ENCODE measurements at regions of chr14 and their contacts with region 1.

Region 1: GRCh38 chr14:55430024-55430690 is 10.3 kb downstream of the TBPL2 start:
- DNase-seq: peak; percentile 70 to 91
- H3K4me3 ChIP-seq: no peak overlapping the region
- H3K27ac ChIP-seq: peak overlapping the region; percentile 37; the same call in 1 of the 2 replicates
- H3K4me1 ChIP-seq: peaks cover 29% of the 10 kb centered on the region
- H3K27me3 ChIP-seq: no peaks in the 10 kb centered on the region
- CTCF ChIP-seq: peak; percentile 64

Region 2: DNA sequence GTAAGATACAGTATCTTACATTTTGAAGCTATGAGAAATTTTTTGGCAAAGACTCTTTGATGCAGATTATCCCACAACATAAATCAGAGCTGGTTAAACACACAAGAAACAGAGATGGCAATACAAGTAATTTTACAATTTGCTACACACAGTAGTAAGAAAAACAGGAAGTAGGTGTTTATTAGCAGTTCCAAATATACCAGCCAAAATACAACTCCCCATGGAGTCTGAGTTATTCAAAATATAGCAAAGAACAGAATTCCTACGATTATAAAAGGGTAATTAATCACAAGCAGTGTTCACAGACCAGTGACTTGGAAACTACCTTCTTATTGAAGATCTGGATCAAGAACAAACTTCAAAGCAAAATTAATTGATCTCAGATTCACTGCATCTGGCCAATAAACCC is 1557.5 kb before region 1 on chr14:
- CTCF ChIA-PET with region 1: no interaction called
- POLR2A ChIA-PET with region 1: no interaction called
- intact Hi-C with region 1: no loop called
- DNase-seq: no peak
- H3K4me3 ChIP-seq: no peak overlapping the region
- H3K27ac ChIP-seq: no peak overlapping the region
- H3K4me1 ChIP-seq: no peaks in the 10 kb centered on the region
- H3K27me3 ChIP-seq: no peaks in the 10 kb centered on the region
- CTCF ChIP-seq: no peak

Region 3: DNA sequence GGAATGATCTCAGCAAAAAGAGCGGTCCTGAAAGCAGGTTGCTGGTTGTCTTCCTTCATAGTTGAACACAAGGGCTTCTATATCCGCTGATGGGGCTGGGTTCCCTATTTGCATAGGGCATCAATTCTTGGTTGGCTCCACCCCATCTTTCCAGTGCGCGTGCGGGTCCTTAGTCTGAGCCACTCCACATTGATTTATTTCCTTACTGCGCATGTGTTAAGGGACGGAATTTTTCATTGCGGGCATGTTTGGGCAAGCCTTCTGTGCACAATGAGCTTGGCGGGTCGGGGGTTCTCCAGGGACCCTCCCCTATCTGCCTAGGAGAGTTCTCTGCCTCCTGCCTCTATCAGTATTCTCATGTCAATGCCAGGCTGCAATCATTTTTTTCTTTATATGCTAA is 217.5 kb before region 1 on chr14:
- CTCF ChIA-PET with region 1: interaction called, 14 read pairs
- POLR2A ChIA-PET with region 1: no interaction called
- intact Hi-C with region 1: loop called (anchors 1 kb)
- DNase-seq: no peak
- H3K4me3 ChIP-seq: no peak overlapping the region
- H3K27ac ChIP-seq: no peak overlapping the region
- H3K4me1 ChIP-seq: no peaks in the 10 kb centered on the region
- H3K27me3 ChIP-seq: no peaks in the 10 kb centered on the region
- CTCF ChIP-seq: no peak

Region 4: DNA sequence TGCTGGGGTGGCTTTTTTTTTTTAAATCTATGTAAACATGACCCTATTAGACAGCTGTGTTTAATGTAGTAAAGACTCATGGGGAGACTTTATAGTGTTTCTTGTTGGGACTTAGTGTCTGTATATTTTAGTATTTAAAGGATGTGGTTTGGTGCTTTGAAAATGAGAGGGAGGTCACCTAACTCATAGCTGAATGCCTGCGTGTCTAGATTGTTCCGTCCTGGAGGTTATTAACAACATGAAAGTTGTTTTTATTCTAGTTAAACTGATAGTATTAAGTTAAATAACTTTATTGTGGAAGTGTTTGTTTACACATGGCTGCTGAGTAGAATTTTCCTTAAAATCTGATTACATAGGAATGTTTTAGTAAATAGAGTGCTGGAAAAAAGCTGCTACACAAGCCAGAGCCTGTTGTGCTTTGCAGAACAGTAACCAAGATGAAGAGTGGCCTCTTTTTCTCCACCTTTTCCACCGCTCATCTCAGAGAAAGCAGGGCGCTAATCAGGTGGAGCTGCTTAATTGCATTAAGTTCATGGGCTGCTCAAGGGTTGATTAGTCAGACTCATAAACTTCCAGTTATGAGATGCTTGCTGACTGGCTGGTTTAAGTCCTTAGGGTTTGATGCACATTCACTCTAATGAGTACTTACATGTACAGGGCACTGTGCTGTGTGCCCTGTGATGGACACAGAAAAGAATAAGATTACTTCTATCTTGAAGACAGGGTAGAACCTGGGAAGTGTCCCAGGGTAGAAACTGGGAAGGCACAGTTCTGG is 96.3 kb before region 1 on chr14:
- CTCF ChIA-PET with region 1: interaction called, 11 read pairs
- POLR2A ChIA-PET with region 1: no interaction called
- intact Hi-C with region 1: no loop called
- DNase-seq: no peak
- H3K4me3 ChIP-seq: no peak overlapping the region
- H3K27ac ChIP-seq: no peak overlapping the region
- H3K4me1 ChIP-seq: peaks cover 36% of the 10 kb centered on the region
- H3K27me3 ChIP-seq: no peaks in the 10 kb centered on the region
- CTCF ChIP-seq: no peak

Region 5: DNA sequence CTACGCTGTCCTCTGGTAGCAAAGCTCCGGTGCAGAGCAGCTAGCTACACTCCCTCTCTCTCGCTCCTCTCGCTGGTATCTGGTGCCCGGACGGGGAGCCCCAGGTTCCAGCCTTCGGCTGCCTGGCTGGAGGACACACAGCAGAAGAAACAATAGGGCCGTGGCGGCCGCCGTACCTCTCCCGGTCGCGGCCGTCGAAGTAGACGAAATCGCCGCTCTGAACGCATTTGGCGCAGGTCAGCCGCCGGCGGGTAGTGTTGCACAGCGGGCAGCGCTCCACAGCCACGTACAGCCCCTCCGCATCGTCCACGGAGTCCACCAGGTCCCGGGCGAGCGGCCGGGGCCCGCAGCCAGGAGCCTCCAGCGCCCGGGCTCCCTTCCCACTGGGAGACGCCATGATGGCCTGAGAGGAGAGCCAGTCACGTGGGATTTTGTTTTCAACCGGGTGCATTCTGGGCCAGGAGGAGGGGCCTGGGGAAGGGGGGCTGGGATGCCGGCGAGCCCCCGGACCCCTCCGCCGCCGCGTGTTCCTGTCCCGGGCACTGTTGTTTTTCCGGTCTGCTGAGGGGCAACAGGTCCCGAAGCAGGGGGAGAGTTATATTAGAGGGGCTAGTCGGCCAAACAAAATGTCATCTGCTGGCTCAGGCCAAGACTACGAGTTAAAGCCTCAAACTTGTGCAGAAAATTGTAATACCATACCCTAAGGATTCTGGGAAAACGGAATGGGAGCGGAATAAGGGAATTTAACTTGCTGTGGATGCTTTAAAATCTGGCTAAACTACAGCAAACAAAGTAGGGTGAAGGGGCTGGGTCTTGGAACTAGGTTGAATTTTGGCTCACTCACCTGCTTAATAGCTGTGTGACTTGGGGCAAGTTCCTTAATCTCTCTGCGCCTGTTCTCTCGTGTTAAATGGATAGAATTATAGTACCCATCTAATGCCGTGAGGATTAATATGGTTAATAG is 18.4 kb before region 1 on chr14 and contains the start of gene ATG14:
- CTCF ChIA-PET with region 1: interaction called, 7 read pairs
- POLR2A ChIA-PET with region 1: interaction called, 4 read pairs
- intact Hi-C with region 1: loop called (anchors 1 kb)
- DNase-seq: peak; percentile 69 to 74
- H3K4me3 ChIP-seq: peak within 1 kb of the TSS; percentile 66
- H3K27ac ChIP-seq: peak within 1 kb of the TSS; percentile 97
- H3K4me1 ChIP-seq: peaks cover 32% of the 10 kb centered on the region
- H3K27me3 ChIP-seq: no peaks in the 10 kb centered on the region
- CTCF ChIP-seq: no peak
- total RNA-seq, gene ATG14: 13.6 and 14.6 TPM in 2 replicates

Measured in PC-9 (cell line).